ENCODE measurements at regions of chr3 and their contacts with region 1.

Region 1: GRCh38 chr3:27590437-27591298 is 106.5 kb upstream of the SLC4A7 start:
- DNase-seq: peak; percentile 22
- ATAC-seq: peak; percentile 79
- H3K4me3 Mint-ChIP-seq: peak overlapping the region; percentile 41
- H3K27ac Mint-ChIP-seq: peak overlapping the region; percentile 81
- H3K4me1 Mint-ChIP-seq: peaks cover 26% of the 10 kb centered on the region
- H3K27me3 Mint-ChIP-seq: no peaks in the 10 kb centered on the region

Region 2: GRCh38 chr3:27533718-27534573 is 56.7 kb before region 1 on chr3:
- CTCF ChIA-PET with region 1: no interaction called
- POLR2A ChIA-PET with region 1: no interaction called
- intact Hi-C with region 1: loop called (anchors 1 to 2 kb)
- DNase-seq: peak; percentile 61
- ATAC-seq: peak; percentile 92
- H3K4me3 Mint-ChIP-seq: peak overlapping the region; percentile 20
- H3K27ac Mint-ChIP-seq: peak overlapping the region; percentile 81
- H3K4me1 Mint-ChIP-seq: peaks cover 11% of the 10 kb centered on the region
- H3K27me3 Mint-ChIP-seq: no peaks in the 10 kb centered on the region

Region 3: DNA sequence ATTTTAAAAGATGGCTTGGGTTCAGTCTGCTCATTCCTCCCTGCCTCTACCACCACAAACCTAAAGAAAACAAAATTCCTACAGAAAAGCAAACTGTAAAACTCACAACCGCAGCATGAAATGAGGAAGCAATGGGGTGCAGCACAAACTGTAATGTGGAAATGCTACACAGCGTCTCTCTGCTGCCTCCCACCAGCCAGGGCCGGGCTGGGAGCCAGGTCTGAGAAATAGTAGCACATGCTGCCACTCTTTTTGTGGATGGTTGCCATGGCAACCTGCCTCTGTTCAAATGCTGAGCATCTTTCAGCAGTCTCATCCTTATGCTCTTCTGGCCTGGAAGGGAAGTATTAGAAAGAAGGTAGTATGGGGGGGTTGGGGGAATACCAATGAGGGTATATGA is 76.0 kb after region 1 on chr3:
- CTCF ChIA-PET with region 1: no interaction called
- POLR2A ChIA-PET with region 1: no interaction called
- intact Hi-C with region 1: no loop called
- DNase-seq: peak; percentile 37
- ATAC-seq: no peak
- H3K4me3 Mint-ChIP-seq: no peak overlapping the region
- H3K27ac Mint-ChIP-seq: no peak overlapping the region
- H3K4me1 Mint-ChIP-seq: peaks cover 12% of the 10 kb centered on the region
- H3K27me3 Mint-ChIP-seq: no peaks in the 10 kb centered on the region